H1 (cell line): ENCODE measurements at regions of chr12 and their contacts with region 1.

Region 1: GRCh38 chr12:49882851-49883470 is 20.7 kb downstream of the FAIM2 start:
- DNase-seq: no peak
- H3K4me3 ChIP-seq: no peak overlapping the region
- H3K27ac ChIP-seq: no peak overlapping the region
- H3K4me1 ChIP-seq: peaks cover 0 to 29% (median 13%) of the 10 kb centered on the region in 4 experiments; a peak in 6 of 7 replicates
- H3K27me3 ChIP-seq: no peaks in the 10 kb centered on the region; a peak in 1 of 7 replicates
- CTCF ChIP-seq: peak in 1 of 3 experiments; percentile 39; a peak in 1 of 4 replicates
- EP300 ChIP-seq: no peak
- POLR2A ChIP-seq: no peak
- RAD21 ChIP-seq: peak in 1 of 2 experiments; percentile 32; a peak in 2 of 4 replicates

Region 2: DNA sequence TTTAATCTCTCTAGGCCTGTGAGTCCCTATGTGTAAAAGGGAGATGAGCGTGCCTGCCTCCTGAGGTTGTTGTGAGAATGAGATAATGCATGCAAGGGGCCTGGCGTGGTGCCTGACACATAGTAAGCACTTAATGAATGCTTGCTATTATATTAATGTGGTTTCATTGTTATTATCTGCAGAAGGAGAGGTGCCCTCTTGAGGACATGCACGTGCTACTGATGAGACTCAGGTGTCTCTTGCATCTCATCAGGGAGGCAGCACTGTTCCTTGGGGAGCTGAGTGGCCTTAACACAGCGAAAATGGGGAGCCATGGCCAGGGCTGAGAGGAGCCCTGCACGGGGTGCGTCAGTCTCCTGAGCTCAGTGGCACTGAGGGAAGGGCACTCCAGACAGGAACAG is 10.2 kb before region 1 on chr12:
- CTCF ChIA-PET with region 1: interaction called, 35 read pairs
- POLR2A ChIA-PET with region 1: interaction called, 8 read pairs
- DNase-seq: peak in 1 of 2 experiments; percentile 33
- H3K4me3 ChIP-seq: no peak overlapping the region
- H3K27ac ChIP-seq: no peak overlapping the region
- H3K4me1 ChIP-seq: no peaks in the 10 kb centered on the region
- H3K27me3 ChIP-seq: no peaks in the 10 kb centered on the region
- CTCF ChIP-seq: no peak
- EP300 ChIP-seq: no peak
- POLR2A ChIP-seq: no peak
- RAD21 ChIP-seq: no peak

Region 3: DNA sequence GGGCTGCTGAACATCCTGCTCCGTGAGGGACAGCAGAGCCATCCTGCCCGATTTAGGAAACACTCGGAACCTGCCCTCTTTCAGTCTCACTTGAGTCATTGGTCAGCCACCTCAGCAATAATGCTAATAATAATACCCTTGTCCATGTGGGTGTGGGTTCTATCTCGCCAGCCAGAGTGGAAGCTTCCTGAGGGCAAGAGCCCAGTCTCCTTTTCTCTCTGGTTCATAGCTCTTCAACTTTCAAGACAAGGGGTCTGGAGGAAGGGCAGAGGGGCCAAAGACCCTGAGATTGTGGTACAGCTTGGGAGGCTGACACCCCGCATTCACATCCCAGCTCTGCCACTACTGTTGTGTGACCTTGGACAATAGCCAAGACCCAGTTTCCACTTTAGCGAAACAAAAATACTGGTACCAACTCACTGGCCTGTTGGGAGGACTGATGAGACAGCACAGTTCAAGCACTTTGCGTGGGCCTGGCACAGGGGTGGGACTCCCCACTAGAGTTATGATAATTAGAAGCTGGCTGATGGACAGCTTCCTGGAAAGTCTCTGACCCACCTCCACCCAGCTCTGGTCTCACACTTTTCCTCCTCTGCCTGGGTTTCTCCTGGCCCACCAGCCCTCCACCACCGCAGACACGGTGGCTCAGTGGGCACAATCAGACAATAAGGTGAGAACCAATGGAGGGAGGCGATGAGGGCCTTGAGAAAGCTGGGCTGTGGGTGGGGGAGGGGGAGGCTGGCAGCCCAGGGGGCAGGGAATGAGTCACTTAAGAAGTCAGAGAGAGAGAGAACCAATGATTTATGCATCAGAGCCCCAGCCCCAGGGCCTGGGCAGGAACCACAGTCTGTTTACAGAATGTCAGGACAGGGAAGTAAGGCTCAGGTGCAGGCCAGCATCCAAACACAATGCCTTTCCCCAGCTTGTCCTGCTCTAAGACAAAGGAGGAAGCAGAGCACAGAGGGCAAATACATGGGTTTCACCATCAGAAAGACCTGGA is 11.1 kb after region 1 on chr12:
- CTCF ChIA-PET with region 1: interaction called, 32 read pairs
- POLR2A ChIA-PET with region 1: interaction called, 8 read pairs
- DNase-seq: no peak
- H3K4me3 ChIP-seq: no peak overlapping the region
- H3K27ac ChIP-seq: no peak overlapping the region
- H3K4me1 ChIP-seq: peaks cover 0 to 10% (median 6%) of the 10 kb centered on the region in 4 experiments; a peak in 5 of 7 replicates
- H3K27me3 ChIP-seq: peaks cover 0 to 11% (median 2%) of the 10 kb centered on the region in 4 experiments; a peak in 5 of 7 replicates
- CTCF ChIP-seq: no peak
- EP300 ChIP-seq: no peak
- POLR2A ChIP-seq: no peak
- RAD21 ChIP-seq: no peak

Region 4: DNA sequence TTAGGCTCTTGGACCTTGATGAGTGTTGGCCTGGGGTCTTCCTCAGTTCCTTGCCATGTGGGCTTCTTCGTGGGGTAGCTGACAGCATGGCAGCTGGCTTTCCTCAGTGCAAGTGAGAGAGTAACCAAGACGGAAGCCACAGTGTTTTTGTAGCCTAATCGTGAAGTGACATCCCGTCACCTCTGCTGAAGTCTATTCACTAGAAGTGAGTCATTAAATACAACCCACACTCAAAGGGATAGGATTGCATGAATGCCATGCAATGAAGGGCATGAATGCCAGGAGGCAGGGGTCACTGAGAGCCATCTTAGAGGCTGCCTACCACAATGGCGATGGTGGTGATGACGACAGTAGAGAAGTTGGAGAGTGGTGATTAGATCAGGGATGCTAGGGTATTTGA is 160.9 kb after region 1 on chr12:
- CTCF ChIA-PET with region 1: no interaction called
- POLR2A ChIA-PET with region 1: no interaction called
- DNase-seq: no peak
- H3K4me3 ChIP-seq: no peak overlapping the region
- H3K27ac ChIP-seq: no peak overlapping the region
- H3K4me1 ChIP-seq: no peaks in the 10 kb centered on the region
- H3K27me3 ChIP-seq: peaks cover 0 to 5% (median under 1%) of the 10 kb centered on the region in 4 experiments; a peak in 3 of 7 replicates
- CTCF ChIP-seq: no peak
- EP300 ChIP-seq: no peak
- POLR2A ChIP-seq: no peak
- RAD21 ChIP-seq: no peak

Region 5: GRCh38 chr12:50297027-50297426 is 414.1 kb after region 1 on chr12:
- CTCF ChIA-PET with region 1: no interaction called
- POLR2A ChIA-PET with region 1: no interaction called
- DNase-seq: no peak
- H3K4me3 ChIP-seq: no peak overlapping the region
- H3K27ac ChIP-seq: no peak overlapping the region
- H3K4me1 ChIP-seq: peaks cover 0 to 3% (median 0%) of the 10 kb centered on the region in 4 experiments; a peak in 1 of 7 replicates
- H3K27me3 ChIP-seq: no peaks in the 10 kb centered on the region
- CTCF ChIP-seq: no peak
- EP300 ChIP-seq: no peak
- POLR2A ChIP-seq: no peak
- RAD21 ChIP-seq: no peak